Left cardiac atrium (tissue), 4 donors: ENCODE measurements at regions of chr9 and their contacts with region 1.

Region 1: GRCh38 chr9:91949946-91950664 is at the start of gene ROR2:
- DNase-seq: peak; percentile 65
- ATAC-seq: peak; percentile 84 to 87
- total RNA-seq, gene ROR2: 18.0 to 25.4 TPM

Region 2: GRCh38 chr9:91775011-91775707 is 174.9 kb before region 1 on chr9:
- intact Hi-C with region 1: loop called in 1 of 2 experiments (anchors 5 kb)
- DNase-seq: peak; percentile 56
- ATAC-seq: peak; percentile 55 to 69

Region 3: DNA sequence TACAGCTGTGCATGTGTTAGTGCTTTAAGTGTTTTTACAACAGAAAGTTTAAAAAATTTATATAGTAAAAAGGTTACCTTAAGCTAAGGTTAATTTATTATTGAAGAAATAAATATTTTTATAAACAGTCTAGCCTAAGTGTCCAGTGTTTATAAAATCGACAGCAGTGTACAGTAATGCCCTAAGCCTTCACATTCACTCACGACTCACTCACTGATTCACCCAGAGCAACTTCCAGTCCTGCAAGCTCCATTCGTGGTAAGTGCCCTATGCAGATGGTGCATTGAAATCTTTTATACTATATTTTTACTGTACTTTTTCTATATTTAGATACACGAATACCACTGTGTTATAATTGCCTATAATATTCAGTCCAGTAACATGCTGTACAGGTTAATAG is 159.2 kb before region 1 on chr9:
- intact Hi-C with region 1: loop called in 1 of 2 experiments (anchors 5 kb)
- DNase-seq: no peak
- ATAC-seq: peak in 1 of 2 donors; percentile 41

Region 4: GRCh38 chr9:91837981-91838731 is 111.9 kb before region 1 on chr9:
- intact Hi-C with region 1: loop called in 1 of 2 experiments (anchors 5 kb)
- DNase-seq: peak; percentile 86
- ATAC-seq: peak; percentile 83 to 92

Region 5: DNA sequence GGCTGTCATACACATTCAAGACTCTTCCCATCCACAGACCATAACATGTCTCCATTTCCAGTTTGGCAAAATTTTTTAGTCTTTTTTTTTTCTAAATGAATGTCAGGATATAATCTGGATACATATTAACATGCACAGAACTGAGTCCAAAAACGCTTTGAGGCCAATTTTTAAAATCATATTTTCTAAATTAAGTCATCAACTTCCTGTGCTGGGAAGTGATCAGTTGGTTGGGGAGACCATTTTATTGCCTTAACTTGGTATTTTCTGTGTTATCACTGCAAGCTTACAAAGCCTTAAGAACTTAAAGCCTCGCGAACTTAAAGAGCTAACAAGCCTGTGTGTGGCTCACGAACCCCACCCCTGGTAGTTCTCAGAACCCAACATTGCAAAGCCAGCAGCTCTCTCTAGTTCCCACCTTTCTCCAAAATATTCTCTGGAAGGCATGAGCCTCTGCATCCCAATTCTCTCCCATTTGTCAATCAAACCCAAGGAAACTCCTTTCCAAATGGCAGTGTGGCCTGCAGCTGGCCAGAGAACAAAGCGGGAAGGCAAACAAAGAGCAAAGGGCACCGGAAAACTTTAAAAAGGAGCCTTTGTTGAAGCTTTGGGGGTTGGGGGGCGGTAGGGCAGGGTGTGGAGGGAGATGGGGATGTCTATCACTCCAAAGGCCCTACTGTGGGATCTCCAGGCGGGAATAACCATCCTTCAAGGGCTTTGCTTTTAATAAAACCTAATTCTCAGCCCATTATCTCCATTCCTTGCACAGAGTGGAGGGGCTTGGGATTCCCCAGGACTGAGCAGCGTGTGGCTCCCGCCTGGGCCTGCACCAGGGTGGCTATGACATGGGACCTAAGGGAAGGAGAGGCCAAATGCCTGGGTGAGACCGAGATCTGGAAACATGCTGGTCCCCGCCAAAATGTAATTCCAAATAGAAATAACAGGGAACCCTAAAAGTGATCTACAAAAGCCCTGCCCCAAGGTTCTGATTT is 65.1 kb before region 1 on chr9:
- intact Hi-C with region 1: loop called in 1 of 2 experiments (anchors 10 kb)
- DNase-seq: no peak
- ATAC-seq: no peak

Region 6: GRCh38 chr9:92010705-92011536 is 60.8 kb after region 1 on chr9:
- intact Hi-C with region 1: no loop called
- DNase-seq: no peak
- ATAC-seq: peak in 1 of 2 donors; percentile 82

Region 7: DNA sequence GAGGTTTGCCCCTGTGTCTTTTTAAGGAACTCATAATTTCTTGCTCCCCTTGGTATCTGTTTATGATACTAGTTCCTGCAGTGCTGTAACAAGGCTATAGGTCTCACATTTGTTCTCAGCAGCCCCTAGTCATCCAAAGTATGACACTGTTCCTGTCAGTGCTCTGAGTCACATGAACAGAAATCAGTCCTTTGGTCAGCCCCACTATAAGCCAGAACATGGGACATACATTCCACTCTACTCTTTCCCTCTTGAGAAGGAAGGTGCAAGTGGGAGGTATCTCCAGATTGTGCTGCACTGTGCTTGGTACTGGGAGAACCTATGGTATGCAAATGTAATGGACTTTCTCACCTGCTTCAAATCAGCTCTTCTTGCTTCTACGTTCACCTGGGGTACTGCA is 256.4 kb after region 1 on chr9:
- intact Hi-C with region 1: no loop called
- DNase-seq: no peak
- ATAC-seq: no peak